BJ (cell line): ENCODE measurements at regions of chr11 and their contacts with region 1.

Region 1: GRCh38 chr11:18115360-18116127 is 9.7 kb upstream of the SAAL1 start:
- DNase-seq: no peak
- H3K4me3 ChIP-seq: no peak overlapping the region
- H3K27me3 ChIP-seq: peaks cover 5% of the 10 kb centered on the region
- CTCF ChIP-seq: peak; percentile 93

Region 2: DNA sequence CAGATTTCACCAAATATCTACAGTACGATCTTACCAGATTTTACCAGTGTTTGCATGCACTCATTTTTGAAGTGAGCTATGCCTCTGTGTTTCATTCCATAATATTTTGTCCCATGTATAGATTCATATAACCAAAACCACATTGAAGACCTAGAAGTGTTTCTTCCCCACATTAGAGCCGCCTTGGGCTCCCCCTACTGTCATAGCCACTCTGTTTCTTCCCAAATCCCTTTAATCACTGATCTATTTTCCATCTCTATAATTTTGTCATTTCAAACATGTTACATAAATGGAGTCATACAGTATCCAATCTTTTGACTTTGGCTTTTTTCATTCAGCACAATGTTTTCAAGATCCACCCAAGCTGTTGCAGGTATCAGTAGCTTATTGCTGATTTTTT is 29.5 kb after region 1 on chr11:
- CTCF ChIA-PET with region 1: interaction called, 10 read pairs
- POLR2A ChIA-PET with region 1: no interaction called
- DNase-seq: no peak
- H3K4me3 ChIP-seq: no peak overlapping the region
- H3K27me3 ChIP-seq: peaks cover 1% of the 10 kb centered on the region; the same call in 1 of the 2 replicates
- CTCF ChIP-seq: 0 out of 2 replicates have a peak, but pooled peaks have one; percentile 20

Region 3: DNA sequence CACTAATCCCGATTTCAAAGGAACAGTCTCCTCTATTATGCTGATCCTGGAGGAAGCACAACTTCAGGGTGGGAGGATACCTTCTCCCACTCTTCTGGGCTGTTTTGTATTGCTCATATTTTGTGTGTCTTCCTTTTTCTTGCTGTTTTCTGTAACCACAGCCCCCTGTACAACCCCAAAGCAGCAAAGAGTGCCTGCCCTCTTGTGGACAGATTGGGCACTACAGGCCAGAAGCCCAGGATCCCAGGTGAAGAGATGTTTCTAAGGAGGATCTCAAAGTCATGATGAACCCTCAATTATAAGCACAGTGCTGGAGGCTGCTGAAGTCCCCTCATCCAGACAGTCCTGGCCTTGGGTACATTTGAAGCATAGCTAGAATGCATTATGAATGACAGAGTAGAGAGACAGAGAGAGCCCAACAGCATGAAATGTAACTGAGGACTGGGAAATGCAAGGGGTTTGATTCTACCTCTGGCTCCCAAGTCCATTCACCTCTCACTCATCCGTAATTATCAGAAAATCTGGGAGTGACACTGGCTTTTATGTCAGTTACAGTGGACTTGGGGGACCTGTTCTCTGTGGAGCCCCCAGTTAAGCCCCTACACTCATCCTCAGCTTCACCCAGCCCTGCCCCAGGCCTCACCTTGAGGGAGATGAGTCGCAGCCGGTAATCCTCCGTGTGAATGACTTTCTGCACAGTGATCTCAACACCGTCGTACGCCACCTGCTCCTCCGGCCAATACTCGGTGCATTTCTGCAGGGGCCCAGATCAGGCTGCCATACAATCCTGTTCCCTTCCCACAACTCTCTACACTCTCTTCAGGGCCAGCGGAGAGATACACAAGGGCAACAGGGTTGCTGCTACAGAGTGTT is 616.6 kb after region 1 on chr11:
- CTCF ChIA-PET with region 1: interaction called, 10 read pairs
- POLR2A ChIA-PET with region 1: no interaction called
- DNase-seq: no peak
- H3K4me3 ChIP-seq: no peak overlapping the region
- H3K27me3 ChIP-seq: 0 out of 2 replicates have a peak, but pooled peaks cover 2% of the 10 kb centered on the region
- CTCF ChIP-seq: peak; percentile 99